ENCODE measurements at regions of chr17 and their contacts with region 1.

Region 1: GRCh38 chr17:77836557-77837041 is 121.9 kb upstream of the TNRC6C start:
- DNase-seq: peak; percentile 78
- H3K4me3 Mint-ChIP-seq: no peak overlapping the region
- H3K27ac Mint-ChIP-seq: peak overlapping the region; percentile 78
- H3K4me1 Mint-ChIP-seq: peaks cover 40% of the 10 kb centered on the region
- H3K27me3 Mint-ChIP-seq: peaks cover 9% of the 10 kb centered on the region

Region 2: GRCh38 chr17:77783991-77784820 is 52.4 kb before region 1 on chr17:
- CTCF ChIA-PET with region 1: no interaction called
- intact Hi-C with region 1: loop called (anchors 1 kb)
- DNase-seq: peak; percentile 88
- H3K4me3 Mint-ChIP-seq: no peak overlapping the region
- H3K27ac Mint-ChIP-seq: peak overlapping the region; percentile 75
- H3K4me1 Mint-ChIP-seq: peaks cover 17% of the 10 kb centered on the region
- H3K27me3 Mint-ChIP-seq: no peaks in the 10 kb centered on the region

Region 3: GRCh38 chr17:77882481-77883212 is 46.0 kb after region 1 on chr17:
- CTCF ChIA-PET with region 1: no interaction called
- intact Hi-C with region 1: loop called (anchors 1 kb)
- DNase-seq: peak; percentile 94
- H3K4me3 Mint-ChIP-seq: peak overlapping the region; percentile 54
- H3K27ac Mint-ChIP-seq: peak overlapping the region; percentile 88
- H3K4me1 Mint-ChIP-seq: peaks cover 87% of the 10 kb centered on the region
- H3K27me3 Mint-ChIP-seq: no peaks in the 10 kb centered on the region